Panc1 (cell line): ENCODE measurements at regions of chr1 and their contacts with region 1.

Region 1: GRCh38 chr1:47437447-47438164 is at the start of gene FOXD2:
- DNase-seq: peak; percentile 57
- ATAC-seq: peak; percentile 93
- H3K4me3 ChIP-seq: peak within 1 kb of the TSS; percentile 63 to 89
- H3K27ac ChIP-seq: peak within 1 kb of the TSS; percentile 83
- H3K4me1 ChIP-seq: peaks cover 26% of the 10 kb centered on the region
- H3K27me3 ChIP-seq: no peaks in the 10 kb centered on the region
- CTCF ChIP-seq: peak; percentile 98
- total RNA-seq, gene FOXD2: 2.2 TPM

Region 2: GRCh38 chr1:47388891-47389238 is 48.7 kb before region 1 on chr1:
- CTCF ChIA-PET with region 1: interaction called, 31 read pairs
- POLR2A ChIA-PET with region 1: interaction called, 4 read pairs
- in situ Hi-C with region 1: no loop called
- intact Hi-C with region 1: no loop called
- DNase-seq: peak; percentile 66
- ATAC-seq: peak; percentile 94
- H3K4me3 ChIP-seq: no peak overlapping the region
- H3K27ac ChIP-seq: no peak overlapping the region
- H3K4me1 ChIP-seq: no peaks in the 10 kb centered on the region; the same call in 1 of the 2 replicates
- H3K27me3 ChIP-seq: no peaks in the 10 kb centered on the region; the same call in 1 of the 2 replicates
- CTCF ChIP-seq: peak; percentile 94

Region 3: GRCh38 chr1:47569681-47570470 is 132.3 kb after region 1 on chr1:
- CTCF ChIA-PET with region 1: interaction called, 10 read pairs
- POLR2A ChIA-PET with region 1: interaction called, 4 read pairs
- in situ Hi-C with region 1: no loop called
- intact Hi-C with region 1: no loop called
- DNase-seq: peak; percentile 58
- ATAC-seq: peak; percentile 80
- H3K4me3 ChIP-seq: no peak overlapping the region
- H3K27ac ChIP-seq: no peak overlapping the region
- H3K4me1 ChIP-seq: no peaks in the 10 kb centered on the region
- H3K27me3 ChIP-seq: no peaks in the 10 kb centered on the region; the same call in none of the 2 replicates
- CTCF ChIP-seq: peak; percentile 65

Region 4: GRCh38 chr1:47710329-47711071 is 272.9 kb after region 1 on chr1:
- CTCF ChIA-PET with region 1: interaction called, 19 read pairs
- POLR2A ChIA-PET with region 1: interaction called, 4 read pairs
- in situ Hi-C with region 1: no loop called
- intact Hi-C with region 1: loop called (anchors 2 kb)
- DNase-seq: peak; percentile 33
- ATAC-seq: peak; percentile 90
- H3K4me3 ChIP-seq: peak overlapping the region; percentile 44 to 56
- H3K27ac ChIP-seq: no peak overlapping the region; the same call in 1 of the 2 replicates
- H3K4me1 ChIP-seq: peaks cover 12% of the 10 kb centered on the region
- H3K27me3 ChIP-seq: peaks cover 2% of the 10 kb centered on the region
- CTCF ChIP-seq: peak; percentile 99